ENCODE measurements at regions of chr21 and their contacts with region 1.

Region 1: GRCh38 chr21:42524349-42525151 is 10.9 kb downstream of the SLC37A1 start:
- DNase-seq: peak; percentile 28
- H3K4me3 Mint-ChIP-seq: no peak overlapping the region
- H3K27ac Mint-ChIP-seq: no peak overlapping the region
- H3K4me1 Mint-ChIP-seq: peaks cover 56% of the 10 kb centered on the region
- H3K27me3 Mint-ChIP-seq: no peaks in the 10 kb centered on the region

Region 2: GRCh38 chr21:42238185-42238934 is 286.2 kb before region 1 on chr21:
- CTCF ChIA-PET with region 1: no interaction called
- POLR2A ChIA-PET with region 1: interaction called, 6 read pairs
- intact Hi-C with region 1: loop called (anchors 1 kb)
- DNase-seq: peak; percentile 67
- H3K4me3 Mint-ChIP-seq: peak overlapping the region; percentile 42
- H3K27ac Mint-ChIP-seq: peak overlapping the region; percentile 80
- H3K4me1 Mint-ChIP-seq: peaks cover 61% of the 10 kb centered on the region
- H3K27me3 Mint-ChIP-seq: no peaks in the 10 kb centered on the region

Region 3: DNA sequence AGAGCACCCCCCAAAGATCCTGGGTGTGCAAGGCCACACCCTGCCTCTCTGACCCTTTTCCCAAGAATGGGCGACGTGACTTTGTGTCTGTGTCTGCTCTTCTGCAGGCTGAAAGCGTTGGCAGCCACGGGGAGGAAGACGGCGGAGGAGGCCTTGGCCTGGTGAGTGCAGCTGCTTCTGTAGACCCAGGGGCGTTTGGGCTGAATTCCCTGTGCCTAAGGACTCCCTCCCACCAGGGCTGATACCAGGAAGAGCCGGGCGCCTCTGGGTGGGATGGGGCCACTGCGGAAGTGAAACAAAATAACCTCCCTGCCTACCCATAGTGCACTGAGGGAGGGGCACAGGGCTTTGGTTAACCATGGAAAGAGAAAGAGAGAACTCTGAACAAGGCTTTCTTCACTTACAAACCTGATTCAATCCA is 118.3 kb before region 1 on chr21:
- CTCF ChIA-PET with region 1: no interaction called
- POLR2A ChIA-PET with region 1: interaction called, 4 read pairs
- intact Hi-C with region 1: loop called (anchors 5 kb)
- DNase-seq: peak; percentile 84
- H3K4me3 Mint-ChIP-seq: peak overlapping the region; percentile 98
- H3K27ac Mint-ChIP-seq: peak overlapping the region; percentile 99
- H3K4me1 Mint-ChIP-seq: peaks cover 54% of the 10 kb centered on the region
- H3K27me3 Mint-ChIP-seq: no peaks in the 10 kb centered on the region

Region 4: DNA sequence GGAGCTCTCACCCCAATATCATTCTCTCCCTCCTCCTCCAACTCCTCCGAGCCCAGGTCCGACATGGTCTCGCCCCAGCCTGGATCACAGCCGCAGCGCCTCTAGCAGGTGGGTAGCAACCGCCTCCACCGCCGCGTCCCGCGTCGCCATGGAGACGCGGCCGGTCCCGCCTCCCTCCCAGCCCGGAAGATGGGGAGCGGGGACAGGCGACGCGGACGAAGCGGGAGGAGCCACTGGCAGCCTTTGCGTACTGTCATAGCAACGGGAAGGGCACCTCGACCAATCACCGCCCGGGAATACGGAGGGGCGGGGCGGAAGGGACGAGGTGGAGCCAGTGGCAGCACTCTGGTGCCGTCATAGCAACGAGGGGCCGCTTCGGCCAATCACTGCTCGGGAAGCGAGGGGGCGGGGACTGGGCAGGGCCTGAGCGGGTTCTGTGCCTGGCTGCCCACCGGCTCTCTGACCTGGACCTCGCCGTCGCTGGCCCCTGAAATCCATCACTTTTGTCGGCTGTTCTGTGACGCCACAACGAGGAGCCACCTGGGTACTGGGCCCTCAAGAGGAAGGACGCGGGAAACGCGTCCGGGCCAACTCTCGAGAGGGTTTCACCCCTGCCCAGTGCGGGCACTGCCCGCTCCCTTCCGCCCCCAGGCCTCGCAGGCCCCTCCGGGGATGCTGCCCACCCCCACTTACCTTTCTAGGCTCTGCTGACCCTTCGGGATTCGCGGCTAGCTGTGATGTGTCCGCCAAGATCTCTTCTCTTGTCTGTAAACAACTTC is 28.2 kb before region 1 on chr21 and contains the start of gene RSPH1:
- CTCF ChIA-PET with region 1: no interaction called
- POLR2A ChIA-PET with region 1: interaction called, 6 read pairs
- intact Hi-C with region 1: loop called (anchors 1 kb)
- DNase-seq: peak; percentile 100
- H3K4me3 Mint-ChIP-seq: peak within 1 kb of the TSS; percentile 90
- H3K27ac Mint-ChIP-seq: peak within 1 kb of the TSS; percentile 67
- H3K4me1 Mint-ChIP-seq: peaks cover 21% of the 10 kb centered on the region
- H3K27me3 Mint-ChIP-seq: peaks cover 1% of the 10 kb centered on the region
- total RNA-seq, gene RSPH1: 0.38 to 0.53 TPM

Region 5: GRCh38 chr21:42913476-42913875 is 388.9 kb after region 1 on chr21:
- CTCF ChIA-PET with region 1: no interaction called
- POLR2A ChIA-PET with region 1: no interaction called
- intact Hi-C with region 1: no loop called
- DNase-seq: no peak
- H3K4me3 Mint-ChIP-seq: no peak overlapping the region
- H3K27ac Mint-ChIP-seq: no peak overlapping the region
- H3K4me1 Mint-ChIP-seq: no peaks in the 10 kb centered on the region
- H3K27me3 Mint-ChIP-seq: no peaks in the 10 kb centered on the region